BJ (cell line): ENCODE measurements at regions of chr19 and their contacts with region 1.

Region 1: GRCh38 chr19:10416380-10417257 is 3.7 kb upstream of the PDE4A start:
- DNase-seq: no peak
- H3K4me3 ChIP-seq: peak overlapping the region; percentile 54
- H3K27me3 ChIP-seq: peaks cover 26% of the 10 kb centered on the region
- CTCF ChIP-seq: peak; percentile 82

Region 2: DNA sequence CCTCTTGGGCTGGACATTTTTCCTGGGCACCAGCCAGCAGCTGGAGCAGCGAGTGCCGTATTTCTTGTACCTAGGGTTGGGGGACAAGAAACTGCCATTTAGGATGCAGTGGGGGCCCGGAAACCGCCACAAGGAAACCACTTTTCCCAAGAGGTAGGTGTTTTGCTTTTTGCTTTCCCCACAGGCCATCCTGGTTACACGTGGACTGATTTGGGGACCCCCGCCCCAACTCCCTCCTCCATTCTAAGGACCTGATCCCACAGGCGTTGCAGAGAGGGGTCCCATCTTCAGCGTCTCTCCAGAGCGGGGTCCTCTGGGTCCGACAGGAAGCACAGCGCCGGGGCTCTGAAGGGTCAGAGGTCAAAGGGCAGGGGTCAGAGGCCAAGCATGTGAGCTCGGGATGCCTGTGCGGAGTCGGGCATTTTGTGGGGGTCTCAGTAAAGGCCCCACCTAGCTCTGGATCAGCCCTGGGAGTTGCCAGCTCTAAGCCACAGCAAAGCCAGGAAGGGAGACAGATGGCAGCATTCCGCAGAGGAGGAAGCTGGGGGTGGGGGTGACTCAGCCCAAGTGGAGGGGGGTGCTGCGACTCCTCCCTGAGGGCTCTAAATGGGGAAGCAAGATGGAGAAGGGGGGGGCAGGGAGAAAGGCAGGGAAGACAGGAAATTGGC is 111.3 kb before region 1 on chr19:
- CTCF ChIA-PET with region 1: no interaction called
- POLR2A ChIA-PET with region 1: no interaction called
- DNase-seq: no peak
- H3K4me3 ChIP-seq: no peak overlapping the region
- H3K27me3 ChIP-seq: no peaks in the 10 kb centered on the region
- CTCF ChIP-seq: no peak

Region 3: GRCh38 chr19:10431943-10432735 is 15.5 kb after region 1 on chr19:
- CTCF ChIA-PET with region 1: interaction called, 321 read pairs
- POLR2A ChIA-PET with region 1: no interaction called
- DNase-seq: no peak
- H3K4me3 ChIP-seq: peak overlapping the region; percentile 59
- H3K27me3 ChIP-seq: peaks cover 7% of the 10 kb centered on the region
- CTCF ChIP-seq: no peak